ENCODE measurements at regions of chr1 and their contacts with region 1.

Region 1: GRCh38 chr1:16958503-16958902 is 21.9 kb downstream of the MFAP2 start:
- DNase-seq: no peak
- H3K4me3 ChIP-seq: no peak overlapping the region
- H3K27ac ChIP-seq: no peak overlapping the region
- H3K4me1 ChIP-seq: peaks cover 4% of the 10 kb centered on the region
- H3K27me3 ChIP-seq: no peaks in the 10 kb centered on the region
- CTCF ChIP-seq: no peak
- POLR2A ChIP-seq: no peak

Region 2: GRCh38 chr1:16913833-16914662 is 44.5 kb before region 1 on chr1:
- intact Hi-C with region 1: no loop called
- DNase-seq: peak; percentile 96
- H3K4me3 ChIP-seq: peak overlapping the region; percentile 86 to 99
- H3K27ac ChIP-seq: peak overlapping the region; percentile 77 to 85
- H3K4me1 ChIP-seq: peaks cover 8% of the 10 kb centered on the region
- H3K27me3 ChIP-seq: no peaks in the 10 kb centered on the region
- CTCF ChIP-seq: peak in 2 of 4 experiments; percentile 20 to 38
- POLR2A ChIP-seq: peak; percentile 62

Region 3: DNA sequence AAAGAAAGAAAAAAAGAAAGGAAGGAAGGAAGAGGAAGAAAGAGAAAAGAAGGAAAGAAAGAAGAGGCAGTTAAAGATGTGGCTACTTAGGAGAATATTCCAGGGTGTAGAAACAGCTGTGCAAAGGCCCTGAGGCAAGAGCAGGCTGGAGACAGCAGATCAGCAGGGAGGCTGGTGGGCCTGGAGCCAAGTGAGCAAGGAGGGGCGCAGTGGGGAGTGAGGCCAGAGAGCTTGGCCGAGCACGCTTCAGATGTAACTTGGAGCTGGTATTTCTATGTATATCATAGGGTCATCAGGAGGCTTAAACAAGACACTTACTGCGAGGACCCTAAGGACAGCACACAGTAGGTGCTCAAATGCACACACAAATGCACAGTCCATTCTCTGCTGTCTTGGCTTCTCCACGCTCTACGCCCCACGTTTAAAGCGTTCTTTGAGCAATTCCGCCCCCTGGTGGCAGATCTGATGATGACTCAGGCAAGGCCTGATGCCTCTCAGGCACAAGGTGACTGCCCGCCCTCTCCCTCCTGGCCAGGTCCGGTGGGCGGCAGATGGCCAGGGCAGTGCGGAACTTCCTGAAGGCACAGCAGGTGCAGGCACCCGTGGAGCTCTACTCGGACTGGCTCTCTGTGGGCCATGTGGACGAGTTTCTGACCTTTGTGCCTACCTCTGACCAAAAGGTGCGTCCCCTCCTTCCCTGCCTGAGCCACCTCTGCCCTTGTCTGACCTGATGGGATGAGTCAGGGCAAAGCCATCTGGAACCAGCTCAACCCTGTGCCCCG is 278.5 kb after region 1 on chr1:
- intact Hi-C with region 1: loop called (anchors 10 kb)
- DNase-seq: peak; percentile 83
- H3K4me3 ChIP-seq: no peak overlapping the region
- H3K27ac ChIP-seq: no peak overlapping the region
- H3K4me1 ChIP-seq: peaks cover 5% of the 10 kb centered on the region
- H3K27me3 ChIP-seq: no peaks in the 10 kb centered on the region
- CTCF ChIP-seq: peak; percentile 75 to 96 (median 90)
- POLR2A ChIP-seq: no peak